ENCODE measurements at regions of chr7 and their contacts with region 1.

Region 1: DNA sequence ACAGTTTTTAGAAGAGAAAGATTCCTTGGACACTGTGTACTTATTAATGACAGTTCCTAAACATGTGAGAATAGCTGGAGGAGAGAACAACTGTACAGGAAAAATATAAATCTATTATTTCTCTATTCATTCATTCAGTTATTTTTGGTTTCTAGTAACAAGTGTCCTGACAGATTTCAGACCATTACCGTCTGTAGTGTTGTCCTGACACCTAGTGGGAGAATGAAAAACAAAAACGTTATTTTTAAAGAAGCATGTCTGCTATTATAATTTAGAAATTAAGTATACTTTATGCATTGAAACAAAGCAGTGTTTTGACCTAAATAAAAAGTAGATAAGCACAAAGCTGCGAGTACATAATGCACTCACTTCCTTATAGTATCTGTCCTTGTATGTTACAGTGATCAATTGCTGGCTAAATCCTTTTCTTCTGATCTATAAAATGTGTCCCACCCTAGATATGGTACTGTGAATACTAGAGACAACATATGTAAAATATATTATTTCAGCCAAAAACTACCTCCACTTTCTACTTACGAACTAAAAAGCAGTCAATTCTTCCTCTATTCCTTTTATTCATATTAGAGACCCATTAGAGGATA is 575.6 kb downstream of the ARL4A start:
- DNase-seq: peak; percentile 7 to 10 (median 9)
- H3K4me3 ChIP-seq: no peak overlapping the region
- H3K4me3 Mint-ChIP-seq: no peak overlapping the region
- H3K27ac ChIP-seq: no peak overlapping the region
- H3K27ac Mint-ChIP-seq: no peak overlapping the region
- H3K4me1 ChIP-seq: no peaks in the 10 kb centered on the region
- H3K4me1 Mint-ChIP-seq: no peaks in the 10 kb centered on the region
- H3K27me3 ChIP-seq: no peaks in the 10 kb centered on the region
- H3K27me3 Mint-ChIP-seq: peaks cover 0 to 9% (median 2%) of the 10 kb centered on the region in 3 donors
- CTCF ChIP-seq: peak; percentile 61

Region 2: GRCh38 chr7:12518920-12519681 is 743.9 kb before region 1 on chr7:
- intact Hi-C with region 1: loop called (anchors 10 kb)
- DNase-seq: no peak
- H3K4me3 ChIP-seq: no peak overlapping the region
- H3K4me3 Mint-ChIP-seq: no peak overlapping the region
- H3K27ac ChIP-seq: no peak overlapping the region
- H3K27ac Mint-ChIP-seq: no peak overlapping the region
- H3K4me1 ChIP-seq: no peaks in the 10 kb centered on the region
- H3K4me1 Mint-ChIP-seq: no peaks in the 10 kb centered on the region
- H3K27me3 ChIP-seq: no peaks in the 10 kb centered on the region
- H3K27me3 Mint-ChIP-seq: peaks cover 0 to 4% (median 1%) of the 10 kb centered on the region in 3 donors
- CTCF ChIP-seq: peak; percentile 36

Region 3: GRCh38 chr7:12524794-12525386 is 738.1 kb before region 1 on chr7:
- intact Hi-C with region 1: loop called in 1 of 2 experiments (anchors 10 kb)
- DNase-seq: peak; percentile 15 to 56 (median 32)
- H3K4me3 ChIP-seq: no peak overlapping the region
- H3K4me3 Mint-ChIP-seq: no peak overlapping the region
- H3K27ac ChIP-seq: no peak overlapping the region
- H3K27ac Mint-ChIP-seq: no peak overlapping the region
- H3K4me1 ChIP-seq: no peaks in the 10 kb centered on the region
- H3K4me1 Mint-ChIP-seq: peaks cover 3% of the 10 kb centered on the region
- H3K27me3 ChIP-seq: no peaks in the 10 kb centered on the region
- H3K27me3 Mint-ChIP-seq: peaks cover 0 to 4% (median 1%) of the 10 kb centered on the region in 3 donors
- CTCF ChIP-seq: peak; percentile 84

Region 4: GRCh38 chr7:12638851-12639467 is 624.1 kb before region 1 on chr7:
- intact Hi-C with region 1: loop called in 1 of 2 experiments (anchors 10 kb)
- DNase-seq: peak; percentile 35 to 72 (median 35)
- H3K4me3 ChIP-seq: peak overlapping the region in 1 of 3 experiments; percentile 51
- H3K4me3 Mint-ChIP-seq: no peak overlapping the region
- H3K27ac ChIP-seq: peak overlapping the region in 1 of 2 donors; percentile 58
- H3K27ac Mint-ChIP-seq: peak overlapping the region in 1 of 7 donors; percentile 80
- H3K4me1 ChIP-seq: peaks cover 13 to 33% of the 10 kb centered on the region in 2 donors
- H3K4me1 Mint-ChIP-seq: peaks cover 22% of the 10 kb centered on the region
- H3K27me3 ChIP-seq: no peaks in the 10 kb centered on the region
- H3K27me3 Mint-ChIP-seq: no peaks in the 10 kb centered on the region
- CTCF ChIP-seq: peak; percentile 84

Measured in CD14-positive monocyte (primary cell).